ENCODE measurements at regions of chr22 and their contacts with region 1.

Region 1: GRCh38 chr22:25777870-25778269 is 35.9 kb downstream of the MYO18B start:
- DNase-seq: no peak
- H3K4me3 ChIP-seq: no peak overlapping the region
- H3K27me3 ChIP-seq: no peaks in the 10 kb centered on the region
- CTCF ChIP-seq: peak; percentile 49

Region 2: DNA sequence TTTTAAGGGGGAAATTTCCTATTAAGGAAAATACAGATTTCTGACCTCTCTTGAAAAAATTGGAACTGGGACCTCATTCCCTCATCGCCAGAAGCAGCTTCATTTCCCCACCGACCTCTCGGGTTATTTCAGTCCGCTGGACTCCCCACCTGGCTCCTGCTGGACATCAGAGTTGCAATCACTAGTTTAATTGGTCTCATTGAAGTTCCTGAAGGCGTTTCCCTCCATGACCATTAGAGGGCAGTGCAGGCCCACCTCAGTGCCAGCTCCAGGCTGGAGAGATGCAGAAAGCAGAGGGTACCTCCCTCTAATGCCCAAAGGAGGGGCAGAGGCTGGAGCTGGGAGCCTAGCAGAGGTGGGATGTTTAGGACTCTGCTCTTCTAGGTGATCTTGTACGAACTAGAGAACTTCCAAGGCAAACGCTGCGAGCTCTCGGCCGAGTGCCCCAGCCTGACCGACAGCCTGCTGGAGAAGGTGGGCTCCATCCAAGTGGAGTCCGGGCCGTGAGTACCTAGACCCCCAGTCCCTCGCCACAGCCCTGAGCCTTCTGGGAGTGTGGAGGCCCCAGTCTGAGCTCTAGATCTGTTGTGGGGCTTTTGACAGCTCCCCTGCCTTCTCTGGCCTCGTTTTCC is 575.5 kb before region 1 on chr22:
- CTCF ChIA-PET with region 1: interaction called, 10 read pairs
- POLR2A ChIA-PET with region 1: no interaction called
- DNase-seq: no peak
- H3K4me3 ChIP-seq: no peak overlapping the region
- H3K27me3 ChIP-seq: no peaks in the 10 kb centered on the region; the same call in 1 of the 2 replicates
- CTCF ChIP-seq: peak; percentile 90

Region 3: GRCh38 chr22:25447686-25448434 is 330.0 kb before region 1 on chr22:
- CTCF ChIA-PET with region 1: interaction called, 15 read pairs
- POLR2A ChIA-PET with region 1: no interaction called
- DNase-seq: no peak
- H3K4me3 ChIP-seq: peak overlapping the region; percentile 71
- H3K27me3 ChIP-seq: no peaks in the 10 kb centered on the region
- CTCF ChIP-seq: peak; percentile 96

Region 4: GRCh38 chr22:25461301-25461700 is 316.6 kb before region 1 on chr22:
- CTCF ChIA-PET with region 1: interaction called, 40 read pairs
- POLR2A ChIA-PET with region 1: no interaction called
- DNase-seq: no peak
- H3K4me3 ChIP-seq: no peak overlapping the region
- H3K27me3 ChIP-seq: no peaks in the 10 kb centered on the region
- CTCF ChIP-seq: no peak

Region 5: DNA sequence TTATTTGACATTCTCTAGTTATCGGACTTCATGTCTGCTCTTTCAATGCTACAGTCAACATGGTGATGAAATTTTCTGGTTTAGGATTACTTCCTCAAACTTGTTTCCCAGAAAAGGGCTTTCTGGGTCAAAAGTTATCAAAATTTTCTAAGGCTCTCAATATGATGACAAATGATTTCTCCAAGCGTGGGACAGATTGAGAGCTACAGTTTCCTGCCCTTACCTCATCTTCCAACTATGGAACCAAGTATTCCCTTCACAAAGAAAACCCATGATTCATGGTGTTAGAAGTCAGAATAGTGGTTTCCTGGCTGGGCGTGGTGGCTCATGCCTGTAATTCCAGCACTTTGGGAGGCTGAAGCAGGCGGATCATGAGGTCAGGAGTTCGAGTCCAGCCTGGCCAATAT is 18.0 kb before region 1 on chr22:
- CTCF ChIA-PET with region 1: interaction called, 38 read pairs
- POLR2A ChIA-PET with region 1: no interaction called
- DNase-seq: peak; percentile 93
- H3K4me3 ChIP-seq: no peak overlapping the region
- H3K27me3 ChIP-seq: no peaks in the 10 kb centered on the region
- CTCF ChIP-seq: no peak

Region 6: DNA sequence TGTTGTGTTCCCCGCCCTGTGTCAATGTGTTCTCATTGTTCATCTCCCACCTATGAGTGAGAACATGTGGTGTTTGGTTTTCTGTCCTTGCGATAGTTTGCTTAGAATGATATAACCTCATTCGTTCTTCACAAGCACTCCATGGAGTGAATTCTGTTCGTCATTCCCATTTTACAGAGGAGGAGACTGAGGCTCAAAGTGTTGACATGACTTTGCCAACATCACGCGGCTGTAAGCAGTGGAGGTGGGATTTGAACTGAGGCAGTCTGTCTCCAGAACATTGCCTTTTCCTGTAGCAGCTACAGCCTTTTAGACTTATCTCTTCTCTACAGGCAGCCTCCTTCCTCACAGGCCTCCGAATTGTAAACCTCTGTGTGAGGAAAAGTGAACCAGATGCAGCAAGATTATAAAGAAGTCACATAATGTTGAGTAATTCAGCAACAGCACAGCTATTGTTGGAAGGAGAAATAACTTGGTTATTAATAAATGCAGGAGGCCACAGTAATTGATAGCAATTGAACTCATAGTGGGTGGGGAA is 38.7 kb after region 1 on chr22:
- CTCF ChIA-PET with region 1: no interaction called
- POLR2A ChIA-PET with region 1: no interaction called
- DNase-seq: no peak
- H3K4me3 ChIP-seq: no peak overlapping the region
- H3K27me3 ChIP-seq: no peaks in the 10 kb centered on the region
- CTCF ChIP-seq: no peak

Region 7: GRCh38 chr22:26330966-26331625 is 553.2 kb after region 1 on chr22:
- CTCF ChIA-PET with region 1: interaction called, 87 read pairs
- POLR2A ChIA-PET with region 1: no interaction called
- DNase-seq: no peak
- H3K4me3 ChIP-seq: no peak overlapping the region
- H3K27me3 ChIP-seq: peaks cover 13% of the 10 kb centered on the region
- CTCF ChIP-seq: peak; percentile 89